PC-9 (cell line): ENCODE measurements at regions of chr7 and their contacts with region 1.

Region 1: DNA sequence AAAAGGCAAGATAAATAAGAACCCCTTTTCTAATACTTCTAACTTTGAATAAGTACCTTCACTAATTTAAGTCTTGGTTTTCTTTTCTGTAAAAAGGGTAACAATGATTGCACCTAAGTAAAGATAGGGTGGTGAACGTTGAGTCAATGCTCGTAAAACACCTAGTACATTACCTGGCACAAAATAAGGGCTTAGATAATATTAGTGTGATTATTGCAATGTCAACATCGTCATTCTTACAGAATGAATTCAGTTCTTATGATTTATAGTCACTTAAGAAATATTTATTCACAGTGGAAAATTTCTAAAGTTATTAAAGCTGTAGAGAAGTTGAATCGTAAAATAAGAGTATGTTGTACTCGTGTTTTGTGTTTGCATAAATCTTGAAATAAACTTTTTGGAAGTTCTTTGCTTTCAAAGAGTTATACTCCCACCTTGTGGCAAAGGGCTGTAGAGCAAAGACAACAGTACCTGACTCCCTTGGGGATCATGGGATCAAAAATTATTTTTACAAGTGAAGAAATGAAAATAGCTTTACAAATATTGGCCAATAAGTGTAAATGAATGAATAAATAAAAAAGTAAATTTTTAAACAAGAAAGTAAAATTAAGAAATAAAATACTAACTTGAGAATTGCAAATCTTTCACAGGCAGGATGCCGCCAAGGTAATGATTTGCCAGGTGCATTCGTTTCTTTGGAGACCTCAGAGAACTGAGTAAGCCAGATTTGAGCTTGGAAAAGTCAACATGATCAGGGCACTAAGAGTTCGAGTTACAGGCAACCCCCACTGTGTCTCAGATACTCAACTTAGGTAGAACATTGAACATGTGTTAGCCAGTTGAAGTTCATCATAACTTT is 285.8 kb upstream of the CACNA2D1 start:
- DNase-seq: peak in 1 of 2 experiments; percentile 41
- H3K4me3 ChIP-seq: peak overlapping the region; percentile 31; the same call in 1 of the 2 replicates
- H3K27ac ChIP-seq: no peak overlapping the region
- H3K4me1 ChIP-seq: no peaks in the 10 kb centered on the region
- H3K27me3 ChIP-seq: no peaks in the 10 kb centered on the region
- CTCF ChIP-seq: peak; percentile 89

Region 2: DNA sequence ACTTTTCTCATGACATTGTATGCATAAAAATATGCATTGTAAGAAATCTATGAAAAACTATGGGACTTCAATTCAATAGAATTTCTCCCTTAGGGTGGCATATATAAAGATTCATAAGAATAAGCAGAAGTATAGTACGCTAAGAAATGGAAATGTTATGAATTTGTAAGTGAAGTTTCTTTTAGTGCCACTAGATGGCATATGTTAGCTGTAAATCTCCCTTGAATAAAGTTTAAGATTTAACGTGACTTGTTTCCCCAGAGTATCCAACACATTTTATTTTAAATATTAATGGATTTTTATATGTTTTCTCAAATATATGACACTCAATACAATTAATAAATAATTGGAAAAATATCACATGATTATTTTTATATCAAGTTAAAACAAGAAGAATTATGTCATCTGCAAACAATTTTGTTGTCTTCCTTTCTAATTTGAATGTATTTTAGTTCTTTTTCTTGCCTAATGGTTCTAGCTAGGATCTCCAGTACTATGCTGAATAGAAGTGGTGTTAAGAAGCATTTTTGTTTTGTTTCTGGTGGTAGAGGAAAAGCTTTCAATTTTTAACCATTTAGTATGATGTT is 1246.7 kb before region 1 on chr7:
- CTCF ChIA-PET with region 1: no interaction called
- POLR2A ChIA-PET with region 1: no interaction called
- intact Hi-C with region 1: loop called (anchors 5 kb)
- DNase-seq: no peak
- H3K4me3 ChIP-seq: no peak overlapping the region
- H3K27ac ChIP-seq: no peak overlapping the region
- H3K4me1 ChIP-seq: no peaks in the 10 kb centered on the region
- H3K27me3 ChIP-seq: no peaks in the 10 kb centered on the region
- CTCF ChIP-seq: peak; percentile 76

Region 3: DNA sequence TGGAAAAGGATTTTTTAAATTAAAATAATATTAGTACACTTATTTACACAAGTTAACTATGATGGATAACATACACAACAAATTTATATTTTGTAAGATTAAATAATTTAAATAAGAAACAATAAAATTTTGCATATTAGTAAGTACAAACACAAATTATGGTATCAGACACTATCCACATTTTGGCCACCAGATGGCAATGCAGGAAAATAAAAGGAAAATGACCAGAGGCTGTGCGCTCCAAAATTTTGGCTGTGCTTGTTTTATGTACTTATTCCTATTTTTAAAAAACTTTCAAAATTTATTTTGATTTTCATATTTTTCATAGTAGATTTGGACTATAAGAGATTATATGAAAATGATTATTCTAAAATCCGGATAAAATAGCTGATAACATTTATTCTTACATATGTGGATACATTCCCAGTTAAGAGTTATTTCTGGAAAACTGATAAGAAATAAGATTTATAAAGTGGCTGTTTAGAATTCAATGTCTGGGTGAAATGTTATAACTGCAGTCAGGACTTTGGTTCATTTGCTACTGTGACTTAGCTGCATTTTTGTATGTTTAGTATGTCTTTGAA is 684.8 kb before region 1 on chr7:
- CTCF ChIA-PET with region 1: no interaction called
- POLR2A ChIA-PET with region 1: no interaction called
- intact Hi-C with region 1: loop called (anchors 1 kb)
- DNase-seq: peak in 1 of 2 experiments; percentile 25
- H3K4me3 ChIP-seq: no peak overlapping the region
- H3K27ac ChIP-seq: no peak overlapping the region
- H3K4me1 ChIP-seq: peaks cover 4% of the 10 kb centered on the region
- H3K27me3 ChIP-seq: no peaks in the 10 kb centered on the region
- CTCF ChIP-seq: peak; percentile 82

Region 4: GRCh38 chr7:82443547-82444219 is 285.7 kb before region 1 on chr7 and contains the start of gene CACNA2D1:
- CTCF ChIA-PET with region 1: no interaction called
- POLR2A ChIA-PET with region 1: no interaction called
- intact Hi-C with region 1: loop called (anchors 1 kb)
- DNase-seq: peak in 1 of 2 experiments; percentile 66
- H3K4me3 ChIP-seq: peak within 1 kb of the TSS; percentile 95
- H3K27ac ChIP-seq: no peak within 1 kb of the TSS
- H3K4me1 ChIP-seq: peaks cover 12% of the 10 kb centered on the region; the same call in 1 of the 2 replicates
- H3K27me3 ChIP-seq: no peaks in the 10 kb centered on the region
- CTCF ChIP-seq: no peak
- total RNA-seq, gene CACNA2D1: 2.5 and 3.2 TPM in 2 replicates

Region 5: GRCh38 chr7:82605247-82605872 is 124.0 kb before region 1 on chr7:
- CTCF ChIA-PET with region 1: no interaction called
- POLR2A ChIA-PET with region 1: no interaction called
- intact Hi-C with region 1: loop called (anchors 1 kb)
- DNase-seq: peak in 1 of 2 experiments; percentile 15
- H3K4me3 ChIP-seq: no peak overlapping the region
- H3K27ac ChIP-seq: no peak overlapping the region
- H3K4me1 ChIP-seq: no peaks in the 10 kb centered on the region
- H3K27me3 ChIP-seq: no peaks in the 10 kb centered on the region
- CTCF ChIP-seq: peak; percentile 87